ENCODE measurements at regions of chr7 and their contacts with region 1.

Region 1: GRCh38 chr7:37916673-37917660 is at the start of gene SFRP4:
- DNase-seq: peak; percentile 47 to 84
- ATAC-seq: peak; percentile 66 to 74
- H3K4me3 ChIP-seq: peak within 1 kb of the TSS; percentile 64
- H3K27ac ChIP-seq: peak within 1 kb of the TSS; percentile 81 to 93
- H3K4me1 ChIP-seq: peaks cover 22% of the 10 kb centered on the region
- CTCF ChIP-seq: peak; percentile 73
- EP300 ChIP-seq: no peak
- POLR2A ChIP-seq: peak; percentile 10; the same call in 1 of the 2 replicates
- RAD21 ChIP-seq: peak; percentile 66 to 75
- polyA plus RNA-seq, gene SFRP4: 9.1 and 11.9 TPM in 2 replicates

Region 2: DNA sequence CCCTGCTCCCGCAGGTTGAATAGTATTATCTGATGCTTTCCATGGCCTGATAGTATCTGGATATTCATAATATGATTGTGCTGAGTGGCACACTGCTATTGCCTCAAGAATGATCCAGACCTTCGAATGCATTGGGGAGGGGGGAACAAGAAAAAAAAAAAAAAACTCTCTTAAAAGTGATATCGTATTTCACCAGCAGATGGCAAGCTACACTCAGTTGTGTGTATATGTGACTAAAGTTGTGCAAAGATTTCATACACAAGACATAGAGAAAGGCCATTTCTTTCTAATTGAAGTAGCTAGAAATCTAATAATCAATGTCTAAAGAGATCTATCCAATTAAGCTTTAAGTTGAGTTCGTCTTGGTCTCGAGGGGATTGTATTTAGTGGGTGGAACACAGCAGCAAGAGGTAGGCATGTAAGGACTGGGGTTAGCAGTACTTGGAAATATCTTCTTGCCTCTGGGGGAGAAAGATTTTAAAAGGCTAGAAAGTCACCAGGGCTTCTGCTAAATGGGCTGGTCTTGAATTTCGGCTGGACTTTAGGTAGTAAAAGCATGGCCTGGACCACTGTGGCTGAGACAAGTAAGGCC is 15.6 kb before region 1 on chr7:
- CTCF ChIA-PET with region 1: interaction called, 159 read pairs
- POLR2A ChIA-PET with region 1: interaction called, 11 read pairs
- DNase-seq: peak; percentile 51 to 83
- ATAC-seq: peak; percentile 78 to 81
- H3K4me3 ChIP-seq: peak overlapping the region; percentile 35
- H3K27ac ChIP-seq: peak overlapping the region; percentile 87 to 96
- H3K4me1 ChIP-seq: peaks cover 49% of the 10 kb centered on the region
- CTCF ChIP-seq: peak; percentile 88
- EP300 ChIP-seq: no peak
- POLR2A ChIP-seq: no peak
- RAD21 ChIP-seq: peak; percentile 89 to 92

Region 3: GRCh38 chr7:37942934-37943610 is 26.1 kb after region 1 on chr7:
- CTCF ChIA-PET with region 1: interaction called, 14 read pairs
- POLR2A ChIA-PET with region 1: interaction called, 6 read pairs
- DNase-seq: peak; percentile 55 to 77
- ATAC-seq: peak; percentile 82 to 92
- H3K4me3 ChIP-seq: no peak overlapping the region
- H3K27ac ChIP-seq: peak overlapping the region; percentile 50 to 77
- H3K4me1 ChIP-seq: peaks cover 59% of the 10 kb centered on the region
- CTCF ChIP-seq: no peak
- EP300 ChIP-seq: no peak
- POLR2A ChIP-seq: no peak
- RAD21 ChIP-seq: no peak

Region 4: GRCh38 chr7:38178004-38178694 is 261.2 kb after region 1 on chr7 and contains the start of gene STARD3NL:
- CTCF ChIA-PET with region 1: interaction called, 4 read pairs
- POLR2A ChIA-PET with region 1: interaction called, 11 read pairs
- DNase-seq: peak; percentile 96 to 100
- ATAC-seq: peak; percentile 99
- H3K4me3 ChIP-seq: peak within 1 kb of the TSS; percentile 73
- H3K27ac ChIP-seq: peak within 1 kb of the TSS; percentile 91 to 94
- H3K4me1 ChIP-seq: peaks cover 25% of the 10 kb centered on the region
- CTCF ChIP-seq: no peak
- EP300 ChIP-seq: no peak
- POLR2A ChIP-seq: peak; percentile 66
- RAD21 ChIP-seq: no peak
- polyA plus RNA-seq, gene STARD3NL: 78.1 and 104 TPM in 2 replicates

Region 5: GRCh38 chr7:38318803-38319416 is 401.9 kb after region 1 on chr7:
- CTCF ChIA-PET with region 1: interaction called, 16 read pairs
- POLR2A ChIA-PET with region 1: interaction called, 3 read pairs
- DNase-seq: peak; percentile 61 to 79
- ATAC-seq: peak; percentile 95 to 98
- H3K4me3 ChIP-seq: no peak overlapping the region
- H3K27ac ChIP-seq: no peak overlapping the region
- H3K4me1 ChIP-seq: peaks cover 13% of the 10 kb centered on the region; the same call in 2 of the 3 replicates
- CTCF ChIP-seq: peak; percentile 74
- EP300 ChIP-seq: no peak
- POLR2A ChIP-seq: no peak
- RAD21 ChIP-seq: peak; percentile 80 to 86